MCF 10A (cell line): ENCODE measurements at regions of chr18 and their contacts with region 1.

Region 1: GRCh38 chr18:63237881-63238667 is 81.5 kb downstream of the BCL2 start:
- DNase-seq: peak; percentile 75
- H3K4me3 Mint-ChIP-seq: peak overlapping the region; percentile 64
- H3K27ac Mint-ChIP-seq: peak overlapping the region; percentile 90
- H3K4me1 Mint-ChIP-seq: peaks cover 17% of the 10 kb centered on the region
- H3K27me3 Mint-ChIP-seq: no peaks in the 10 kb centered on the region
- CTCF ChIP-seq: no peak

Region 2: DNA sequence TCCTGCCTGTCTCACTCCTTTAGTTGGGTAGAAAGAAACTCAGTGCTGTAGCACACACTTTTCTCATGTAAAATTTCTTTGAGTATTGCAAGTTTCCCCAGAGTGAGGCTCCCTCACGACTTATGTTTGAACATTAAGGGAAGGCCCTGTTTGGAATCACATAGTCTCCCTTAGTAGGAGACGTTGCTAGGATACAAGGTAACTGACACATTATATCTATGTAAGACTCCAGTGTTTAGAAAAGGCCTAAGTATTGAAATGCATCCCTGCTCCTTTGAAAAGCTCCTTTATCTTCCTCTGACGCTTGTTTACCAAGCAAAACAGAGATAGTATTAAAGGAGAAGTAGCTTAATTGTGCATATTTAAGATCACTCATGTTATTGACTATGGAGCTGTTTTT is 274.6 kb before region 1 on chr18:
- CTCF ChIA-PET with region 1: no interaction called
- POLR2A ChIA-PET with region 1: no interaction called
- intact Hi-C with region 1: no loop called
- DNase-seq: no peak
- H3K4me3 Mint-ChIP-seq: no peak overlapping the region
- H3K27ac Mint-ChIP-seq: no peak overlapping the region
- H3K4me1 Mint-ChIP-seq: no peaks in the 10 kb centered on the region
- H3K27me3 Mint-ChIP-seq: no peaks in the 10 kb centered on the region
- CTCF ChIP-seq: no peak

Region 3: DNA sequence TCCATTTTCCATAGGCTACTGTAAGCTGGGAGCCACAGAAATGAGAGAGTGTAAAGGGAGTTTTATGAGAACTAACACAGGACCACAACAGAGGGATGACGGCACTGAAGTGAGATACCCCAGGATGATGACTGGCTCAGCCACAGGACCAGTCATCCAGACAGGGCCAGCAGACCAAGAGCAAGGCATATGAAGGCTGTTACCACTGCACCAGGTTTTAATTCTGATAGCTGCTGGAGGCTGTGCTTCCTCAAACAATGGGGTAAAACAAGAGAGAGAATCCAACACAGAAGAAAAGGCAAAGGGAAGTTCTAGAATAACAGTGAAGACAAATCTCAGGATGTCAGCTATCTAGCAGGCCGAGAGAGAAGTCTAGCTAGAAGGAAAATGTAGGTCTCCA is 13.4 kb before region 1 on chr18:
- CTCF ChIA-PET with region 1: interaction called, 3 read pairs
- POLR2A ChIA-PET with region 1: interaction called, 10 read pairs
- intact Hi-C with region 1: no loop called
- DNase-seq: no peak
- H3K4me3 Mint-ChIP-seq: no peak overlapping the region
- H3K27ac Mint-ChIP-seq: no peak overlapping the region
- H3K4me1 Mint-ChIP-seq: peaks cover 12% of the 10 kb centered on the region
- H3K27me3 Mint-ChIP-seq: no peaks in the 10 kb centered on the region
- CTCF ChIP-seq: no peak

Region 4: GRCh38 chr18:63253428-63254372 is 15.6 kb after region 1 on chr18:
- CTCF ChIA-PET with region 1: no interaction called
- POLR2A ChIA-PET with region 1: no interaction called
- intact Hi-C with region 1: no loop called
- DNase-seq: no peak
- H3K4me3 Mint-ChIP-seq: no peak overlapping the region
- H3K27ac Mint-ChIP-seq: peak overlapping the region; percentile 22
- H3K4me1 Mint-ChIP-seq: no peaks in the 10 kb centered on the region
- H3K27me3 Mint-ChIP-seq: no peaks in the 10 kb centered on the region
- CTCF ChIP-seq: no peak